PC-3 (cell line): ENCODE measurements at regions of chr10 and their contacts with region 1.

Region 1: DNA sequence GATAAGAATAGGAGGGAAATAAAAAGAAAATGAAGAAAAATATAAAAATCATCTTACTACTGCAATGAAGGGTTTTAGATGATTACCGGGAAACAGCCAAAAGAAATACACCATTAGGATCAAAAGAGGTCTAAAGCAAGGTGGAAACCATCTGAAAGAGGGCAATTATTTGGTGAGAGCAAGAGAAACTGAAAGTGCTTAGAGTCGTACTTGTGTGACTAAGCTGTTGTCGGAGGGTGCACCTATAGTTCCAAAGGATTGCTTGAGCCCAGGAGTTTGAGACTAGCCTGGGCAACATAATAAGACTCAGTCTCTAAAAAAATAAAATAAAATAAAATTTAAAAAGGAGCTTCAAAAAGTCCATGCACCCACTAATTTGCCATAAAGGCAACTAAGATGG is 169.5 kb downstream of the DKK1 start:
- DNase-seq: no peak
- ATAC-seq: no peak
- H3K4me3 ChIP-seq: no peak overlapping the region
- H3K27ac ChIP-seq: no peak overlapping the region
- H3K4me1 ChIP-seq: peaks cover 40% of the 10 kb centered on the region
- H3K27me3 ChIP-seq: no peaks in the 10 kb centered on the region
- CTCF ChIP-seq: no peak

Region 2: GRCh38 chr10:52319926-52320325 is 163.7 kb before region 1 on chr10:
- CTCF ChIA-PET with region 1: interaction called, 56 read pairs
- POLR2A ChIA-PET with region 1: interaction called, 27 read pairs
- intact Hi-C with region 1: no loop called
- DNase-seq: peak; percentile 72
- ATAC-seq: no peak
- H3K4me3 ChIP-seq: peak overlapping the region; percentile 34
- H3K27ac ChIP-seq: peak overlapping the region; percentile 86
- H3K4me1 ChIP-seq: peaks cover 35% of the 10 kb centered on the region
- H3K27me3 ChIP-seq: no peaks in the 10 kb centered on the region
- CTCF ChIP-seq: no peak